Right ventricle myocardium superior (tissue), 1 donor: ENCODE measurements at regions of chr3 and their contacts with region 1.

Region 1: DNA sequence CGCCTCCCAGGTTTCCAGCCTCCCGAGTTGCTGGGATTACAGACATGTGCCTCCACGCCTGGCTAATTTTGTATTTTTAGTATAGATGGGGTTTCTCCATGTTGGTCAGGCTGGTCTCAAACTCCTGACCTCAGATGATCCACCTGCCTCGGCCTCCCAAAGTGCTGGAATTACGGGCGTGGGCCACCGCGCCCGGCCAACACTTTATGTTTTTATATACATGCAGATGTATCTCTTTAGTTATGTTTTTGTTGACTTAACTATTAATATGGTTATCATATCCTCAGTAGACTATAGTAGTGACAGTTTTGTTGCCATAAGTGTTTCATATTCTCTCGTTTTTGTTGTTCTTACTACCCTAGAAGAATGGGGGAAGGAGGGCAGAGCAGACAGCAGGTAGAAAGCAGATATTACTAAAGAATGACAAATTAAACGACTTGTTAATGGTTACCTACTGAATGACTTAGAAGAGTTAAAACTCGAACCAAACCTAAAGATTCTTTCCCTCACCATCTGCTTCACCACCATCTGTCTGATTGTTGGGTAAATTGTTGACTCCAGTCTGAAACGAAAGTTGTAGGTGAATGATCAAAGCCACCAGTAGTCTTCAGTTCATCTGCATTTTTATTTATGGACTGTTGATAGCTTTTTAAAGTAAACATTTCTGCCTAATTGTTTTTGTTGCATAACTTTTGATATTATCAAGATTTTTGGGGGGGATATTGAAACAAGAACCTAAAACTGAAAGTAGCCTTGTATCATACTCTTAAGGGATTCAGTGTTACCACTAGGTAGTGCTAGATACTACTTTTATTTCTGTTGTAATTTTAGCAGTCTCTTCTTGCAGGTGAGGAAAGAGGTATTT is 89.3 kb downstream of the RASA2 start:
- DNase-seq: no peak
- ATAC-seq: peak; percentile 68

Region 2: DNA sequence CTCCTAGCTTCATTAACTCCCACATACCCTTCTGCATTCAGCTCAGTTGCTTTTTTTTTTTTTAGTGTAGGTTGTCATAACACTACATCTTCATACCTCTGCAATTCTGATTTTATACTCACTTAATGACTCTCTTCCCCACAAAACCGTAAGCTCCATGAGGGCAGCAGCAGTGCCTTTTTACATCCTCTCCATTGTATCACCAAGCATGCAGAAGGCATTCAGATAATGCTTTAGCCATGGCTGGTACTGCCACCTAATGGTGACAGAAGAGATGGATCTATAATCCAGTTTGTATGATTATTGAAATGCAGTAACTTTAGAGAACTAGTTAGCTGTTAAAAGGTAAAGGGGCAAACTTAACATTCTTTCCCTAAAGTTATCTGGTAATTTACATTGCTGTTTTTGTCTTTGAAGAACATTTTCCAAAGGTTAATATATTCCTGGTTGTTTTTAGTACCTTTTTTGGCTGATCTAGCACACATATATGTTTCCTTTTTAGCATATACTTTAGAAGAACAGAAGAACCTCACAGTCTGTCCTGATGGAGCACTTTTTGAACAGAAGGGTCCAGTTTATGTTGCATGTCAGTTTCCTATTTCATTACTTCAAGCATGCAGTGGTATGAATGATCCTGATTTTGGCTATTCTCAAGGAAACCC is 337.2 kb after region 1 on chr3:
- intact Hi-C with region 1: loop called (anchors 10 kb)
- DNase-seq: no peak
- ATAC-seq: peak; percentile 65